ENCODE measurements at regions of chr5 and their contacts with region 1.

Region 1: GRCh38 chr5:141557681-141558136 is 61.1 kb downstream of the DIAPH1 start:
- DNase-seq: peak; percentile 80
- ATAC-seq: peak; percentile 81
- H3K4me3 ChIP-seq: no peak overlapping the region
- H3K4me3 Mint-ChIP-seq: no peak overlapping the region
- H3K27ac ChIP-seq: no peak overlapping the region
- H3K27ac Mint-ChIP-seq: peak overlapping the region; percentile 80
- H3K4me1 ChIP-seq: no peaks in the 10 kb centered on the region
- H3K4me1 Mint-ChIP-seq: peaks cover 4% of the 10 kb centered on the region
- H3K27me3 ChIP-seq: no peaks in the 10 kb centered on the region
- H3K27me3 Mint-ChIP-seq: no peaks in the 10 kb centered on the region
- CTCF ChIP-seq: peak; percentile 82

Region 2: GRCh38 chr5:140468188-140468587 is 1089.5 kb before region 1 on chr5:
- CTCF ChIA-PET with region 1: no interaction called
- POLR2A ChIA-PET with region 1: no interaction called
- intact Hi-C with region 1: no loop called
- DNase-seq: no peak
- ATAC-seq: no peak
- H3K4me3 ChIP-seq: no peak overlapping the region
- H3K4me3 Mint-ChIP-seq: no peak overlapping the region
- H3K27ac ChIP-seq: no peak overlapping the region
- H3K27ac Mint-ChIP-seq: no peak overlapping the region
- H3K4me1 ChIP-seq: no peaks in the 10 kb centered on the region
- H3K4me1 Mint-ChIP-seq: peaks cover 2% of the 10 kb centered on the region
- H3K27me3 ChIP-seq: no peaks in the 10 kb centered on the region
- H3K27me3 Mint-ChIP-seq: no peaks in the 10 kb centered on the region
- CTCF ChIP-seq: no peak

Region 3: DNA sequence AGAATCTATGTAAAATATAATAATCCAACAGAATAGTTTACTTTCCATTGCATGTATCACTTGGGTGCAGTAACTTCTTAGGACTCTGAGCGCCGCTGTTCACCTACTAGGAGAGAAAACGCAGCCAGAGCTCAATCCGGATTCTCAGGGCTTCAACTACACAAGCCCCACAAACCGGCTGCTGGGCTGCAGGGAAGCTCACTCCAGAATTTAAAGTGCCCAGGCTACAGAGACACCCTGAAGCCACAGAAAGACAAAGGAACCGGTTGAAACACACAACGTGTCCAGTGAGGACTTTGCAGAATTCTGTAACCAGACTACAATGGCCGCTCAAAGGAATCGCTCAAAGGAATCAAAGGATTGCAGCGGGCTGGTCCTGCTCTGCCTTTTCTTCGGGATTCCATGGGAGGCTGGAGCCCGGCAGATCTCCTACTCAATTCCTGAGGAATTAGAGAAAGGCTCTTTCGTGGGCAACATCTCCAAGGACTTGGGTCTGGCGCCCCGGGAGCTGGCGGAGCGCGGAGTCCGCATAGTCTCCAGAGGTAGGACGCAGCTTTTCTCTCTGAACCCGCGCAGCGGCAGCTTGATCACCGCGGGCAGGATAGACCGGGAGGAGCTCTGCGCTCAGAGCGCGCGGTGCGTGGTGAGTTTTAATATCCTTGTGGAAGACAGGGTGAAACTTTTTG is 144.7 kb before region 1 on chr5 and contains the start of gene PCDHGA10:
- CTCF ChIA-PET with region 1: interaction called, 56 read pairs
- POLR2A ChIA-PET with region 1: no interaction called
- intact Hi-C with region 1: loop called (anchors 1 kb)
- DNase-seq: peak; percentile 65
- ATAC-seq: peak; percentile 68
- H3K4me3 ChIP-seq: peak within 1 kb of the TSS; percentile 5 to 63 (median 45)
- H3K4me3 Mint-ChIP-seq: peak within 1 kb of the TSS; percentile 87
- H3K27ac ChIP-seq: no peak within 1 kb of the TSS
- H3K27ac Mint-ChIP-seq: peak within 1 kb of the TSS; percentile 17
- H3K4me1 ChIP-seq: peaks cover 11 to 15% of the 10 kb centered on the region in 2 donors
- H3K4me1 Mint-ChIP-seq: peaks cover 18% of the 10 kb centered on the region
- H3K27me3 ChIP-seq: peaks cover 0 to 69% (median 55%) of the 10 kb centered on the region in 4 experiments
- H3K27me3 Mint-ChIP-seq: peaks cover 59% of the 10 kb centered on the region
- CTCF ChIP-seq: peak; percentile 82
- total RNA-seq, gene PCDHGA10: 1.9 and 2.0 TPM in 2 replicates

Region 4: DNA sequence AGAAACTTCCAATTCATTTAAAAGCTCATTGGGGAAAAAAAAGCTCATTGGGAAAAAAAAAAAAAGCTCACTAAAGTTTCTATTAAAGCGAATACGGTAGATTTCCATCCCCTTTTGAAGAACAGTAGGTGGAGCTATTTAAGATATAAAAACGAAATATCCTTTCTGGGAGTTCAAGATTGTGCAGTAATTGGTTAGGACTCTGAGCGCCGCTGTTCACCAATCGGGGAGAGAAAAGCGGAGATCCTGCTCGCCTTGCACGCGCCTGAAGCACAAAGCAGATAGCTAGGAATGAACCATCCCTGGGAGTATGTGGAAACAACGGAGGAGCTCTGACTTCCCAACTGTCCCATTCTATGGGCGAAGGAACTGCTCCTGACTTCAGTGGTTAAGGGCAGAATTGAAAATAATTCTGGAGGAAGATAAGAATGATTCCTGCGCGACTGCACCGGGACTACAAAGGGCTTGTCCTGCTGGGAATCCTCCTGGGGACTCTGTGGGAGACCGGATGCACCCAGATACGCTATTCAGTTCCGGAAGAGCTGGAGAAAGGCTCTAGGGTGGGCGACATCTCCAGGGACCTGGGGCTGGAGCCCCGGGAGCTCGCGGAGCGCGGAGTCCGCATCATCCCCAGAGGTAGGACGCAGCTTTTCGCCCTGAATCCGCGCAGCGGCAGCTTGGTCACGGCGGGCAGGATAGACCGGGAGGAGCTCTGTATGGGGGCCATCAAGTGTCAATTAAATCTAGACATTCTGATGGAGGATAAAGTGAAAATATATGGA is 127.2 kb before region 1 on chr5 and contains the start of gene PCDHGA12:
- CTCF ChIA-PET with region 1: interaction called, 31 read pairs
- POLR2A ChIA-PET with region 1: no interaction called
- intact Hi-C with region 1: no loop called
- DNase-seq: peak; percentile 65
- ATAC-seq: peak; percentile 82
- H3K4me3 ChIP-seq: peak within 1 kb of the TSS in 4 of 5 experiments; percentile 30 to 35 (median 32)
- H3K4me3 Mint-ChIP-seq: peak within 1 kb of the TSS; percentile 86
- H3K27ac ChIP-seq: no peak within 1 kb of the TSS
- H3K27ac Mint-ChIP-seq: peak within 1 kb of the TSS; percentile 29
- H3K4me1 ChIP-seq: peaks cover 15 to 17% of the 10 kb centered on the region in 2 donors
- H3K4me1 Mint-ChIP-seq: peaks cover 7% of the 10 kb centered on the region
- H3K27me3 ChIP-seq: peaks cover 0 to 57% (median 30%) of the 10 kb centered on the region in 4 experiments
- H3K27me3 Mint-ChIP-seq: peaks cover 46% of the 10 kb centered on the region
- CTCF ChIP-seq: peak; percentile 68
- total RNA-seq, gene PCDHGA12: 1.6 and 2.8 TPM in 2 replicates

Region 5: GRCh38 chr5:141524604-141525597 is 32.8 kb before region 1 on chr5:
- CTCF ChIA-PET with region 1: interaction called, 29 read pairs
- POLR2A ChIA-PET with region 1: no interaction called
- intact Hi-C with region 1: no loop called
- DNase-seq: peak; percentile 78
- ATAC-seq: peak; percentile 89
- H3K4me3 ChIP-seq: no peak overlapping the region
- H3K4me3 Mint-ChIP-seq: no peak overlapping the region
- H3K27ac ChIP-seq: no peak overlapping the region
- H3K27ac Mint-ChIP-seq: peak overlapping the region; percentile 67
- H3K4me1 ChIP-seq: peaks cover 9 to 10% of the 10 kb centered on the region in 2 donors
- H3K4me1 Mint-ChIP-seq: peaks cover 18% of the 10 kb centered on the region
- H3K27me3 ChIP-seq: no peaks in the 10 kb centered on the region
- H3K27me3 Mint-ChIP-seq: no peaks in the 10 kb centered on the region
- CTCF ChIP-seq: peak; percentile 100

Region 6: GRCh38 chr5:141661894-141662435 is 104.3 kb after region 1 on chr5:
- CTCF ChIA-PET with region 1: no interaction called
- POLR2A ChIA-PET with region 1: no interaction called
- intact Hi-C with region 1: no loop called
- DNase-seq: no peak
- ATAC-seq: no peak
- H3K4me3 ChIP-seq: no peak overlapping the region
- H3K4me3 Mint-ChIP-seq: no peak overlapping the region
- H3K27ac ChIP-seq: no peak overlapping the region
- H3K27ac Mint-ChIP-seq: no peak overlapping the region
- H3K4me1 ChIP-seq: peaks cover 4 to 6% of the 10 kb centered on the region in 2 donors
- H3K4me1 Mint-ChIP-seq: peaks cover 4% of the 10 kb centered on the region
- H3K27me3 ChIP-seq: peaks cover 0 to 4% (median 1%) of the 10 kb centered on the region in 4 experiments
- H3K27me3 Mint-ChIP-seq: peaks cover 10% of the 10 kb centered on the region
- CTCF ChIP-seq: no peak

Measured in B cell (primary cell).